Sigmoid colon (tissue), 7 donors: ENCODE measurements at regions of chr13 and their contacts with region 1.

Region 1: GRCh38 chr13:97432917-97433726 is 847 bp upstream of the RAP2A start:
- DNase-seq: peak; percentile 100
- H3K4me3 ChIP-seq: peak overlapping the region; percentile 69 to 83 (median 81)
- H3K27ac ChIP-seq: peak overlapping the region; percentile 99 to 100 (median 100)
- H3K4me1 ChIP-seq: peaks cover 0 to 37% (median 25%) of the 10 kb centered on the region in 4 donors
- H3K27me3 ChIP-seq: no peaks in the 10 kb centered on the region
- CTCF ChIP-seq: no peak
- EP300 ChIP-seq: peak in 2 of 4 donors; percentile 21 to 27
- POLR2A ChIP-seq: peak; percentile 55 to 70

Region 2: GRCh38 chr13:95676762-95677563 is 1756.2 kb before region 1 on chr13 and contains the start of gene DNAJC3:
- intact Hi-C with region 1: loop called (anchors 5 kb)
- DNase-seq: peak; percentile 100
- H3K4me3 ChIP-seq: peak within 1 kb of the TSS; percentile 77 to 91 (median 88)
- H3K27ac ChIP-seq: peak within 1 kb of the TSS; percentile 97 to 98 (median 98)
- H3K4me1 ChIP-seq: peaks cover 0 to 50% (median 36%) of the 10 kb centered on the region in 4 donors
- H3K27me3 ChIP-seq: no peaks in the 10 kb centered on the region
- CTCF ChIP-seq: no peak
- EP300 ChIP-seq: peak in 1 of 4 donors; percentile 45
- POLR2A ChIP-seq: peak; percentile 77 to 90
- total RNA-seq, gene DNAJC3: 41.5 to 48.5 (median 43.4) TPM

Region 3: GRCh38 chr13:96053011-96053703 is 1380.0 kb before region 1 on chr13 and contains the start of gene UGGT2:
- intact Hi-C with region 1: loop called (anchors 5 kb)
- DNase-seq: peak; percentile 98
- H3K4me3 ChIP-seq: peak within 1 kb of the TSS; percentile 83 to 93 (median 88)
- H3K27ac ChIP-seq: peak within 1 kb of the TSS; percentile 81 to 87 (median 82)
- H3K4me1 ChIP-seq: peaks cover 0 to 12% (median 10%) of the 10 kb centered on the region in 4 donors
- H3K27me3 ChIP-seq: no peaks in the 10 kb centered on the region
- CTCF ChIP-seq: no peak
- EP300 ChIP-seq: peak in 1 of 4 donors; percentile 50
- POLR2A ChIP-seq: peak; percentile 58 to 60
- total RNA-seq, gene UGGT2: 32.7 to 40.2 (median 38.6) TPM

Region 4: GRCh38 chr13:97109841-97110492 is 323.2 kb before region 1 on chr13:
- intact Hi-C with region 1: loop called (anchors 5 kb)
- DNase-seq: peak; percentile 96
- H3K4me3 ChIP-seq: peak overlapping the region in 2 of 4 donors; percentile 20 to 27
- H3K27ac ChIP-seq: peak overlapping the region; percentile 68 to 90 (median 83)
- H3K4me1 ChIP-seq: peaks cover 0 to 69% (median 65%) of the 10 kb centered on the region in 4 donors
- H3K27me3 ChIP-seq: no peaks in the 10 kb centered on the region
- CTCF ChIP-seq: peak; percentile 87 to 95 (median 90)
- EP300 ChIP-seq: peak in 1 of 4 donors; percentile 43
- POLR2A ChIP-seq: no peak

Region 5: GRCh38 chr13:97198753-97199152 is 234.4 kb before region 1 on chr13:
- intact Hi-C with region 1: no loop called
- DNase-seq: no peak
- H3K4me3 ChIP-seq: no peak overlapping the region
- H3K27ac ChIP-seq: no peak overlapping the region
- H3K4me1 ChIP-seq: peaks cover 0 to 4% (median 0%) of the 10 kb centered on the region in 4 donors
- H3K27me3 ChIP-seq: no peaks in the 10 kb centered on the region
- CTCF ChIP-seq: no peak
- EP300 ChIP-seq: no peak
- POLR2A ChIP-seq: no peak

Region 6: GRCh38 chr13:97221989-97222700 is 211.0 kb before region 1 on chr13 and contains the start of gene MBNL2:
- intact Hi-C with region 1: loop called (anchors 5 kb)
- DNase-seq: peak; percentile 97
- H3K4me3 ChIP-seq: peak within 1 kb of the TSS; percentile 59 to 62 (median 61)
- H3K27ac ChIP-seq: peak within 1 kb of the TSS; percentile 88 to 94 (median 92)
- H3K4me1 ChIP-seq: peaks cover 0 to 33% (median 30%) of the 10 kb centered on the region in 4 donors
- H3K27me3 ChIP-seq: no peaks in the 10 kb centered on the region
- CTCF ChIP-seq: no peak
- EP300 ChIP-seq: peak in 3 of 4 donors; percentile 74 to 92 (median 87)
- POLR2A ChIP-seq: peak; percentile 76 to 80
- total RNA-seq, gene MBNL2: 84.7 to 110 (median 95.1) TPM

Region 7: GRCh38 chr13:97275265-97275664 is 157.9 kb before region 1 on chr13:
- intact Hi-C with region 1: no loop called
- DNase-seq: no peak
- H3K4me3 ChIP-seq: no peak overlapping the region
- H3K27ac ChIP-seq: peak overlapping the region; percentile 72 to 89 (median 80)
- H3K4me1 ChIP-seq: peaks cover 0 to 95% (median 89%) of the 10 kb centered on the region in 4 donors
- H3K27me3 ChIP-seq: no peaks in the 10 kb centered on the region
- CTCF ChIP-seq: no peak
- EP300 ChIP-seq: no peak
- POLR2A ChIP-seq: no peak

Region 8: GRCh38 chr13:97359181-97360057 is 73.7 kb before region 1 on chr13:
- intact Hi-C with region 1: loop called (anchors 5 kb)
- DNase-seq: peak; percentile 84
- H3K4me3 ChIP-seq: no peak overlapping the region
- H3K27ac ChIP-seq: peak overlapping the region; percentile 20 to 73 (median 51)
- H3K4me1 ChIP-seq: peaks cover 0 to 50% (median 22%) of the 10 kb centered on the region in 4 donors
- H3K27me3 ChIP-seq: no peaks in the 10 kb centered on the region
- CTCF ChIP-seq: peak; percentile 78 to 93 (median 89)
- EP300 ChIP-seq: peak in 1 of 4 donors; percentile 22
- POLR2A ChIP-seq: no peak

Region 9: GRCh38 chr13:97802213-97802612 is 369.1 kb after region 1 on chr13:
- intact Hi-C with region 1: no loop called
- DNase-seq: no peak
- H3K4me3 ChIP-seq: no peak overlapping the region
- H3K27ac ChIP-seq: no peak overlapping the region
- H3K4me1 ChIP-seq: no peaks in the 10 kb centered on the region
- H3K27me3 ChIP-seq: no peaks in the 10 kb centered on the region
- CTCF ChIP-seq: no peak
- EP300 ChIP-seq: no peak
- POLR2A ChIP-seq: no peak

Region 10: GRCh38 chr13:97975848-97976609 is 542.9 kb after region 1 on chr13:
- intact Hi-C with region 1: loop called (anchors 5 kb)
- DNase-seq: peak; percentile 94
- H3K4me3 ChIP-seq: peak overlapping the region; percentile 80 to 96 (median 86)
- H3K27ac ChIP-seq: peak overlapping the region; percentile 95 to 98 (median 97)
- H3K4me1 ChIP-seq: peaks cover 0 to 38% (median 30%) of the 10 kb centered on the region in 4 donors
- H3K27me3 ChIP-seq: no peaks in the 10 kb centered on the region
- CTCF ChIP-seq: no peak
- EP300 ChIP-seq: no peak
- POLR2A ChIP-seq: peak in 1 of 2 donors; percentile 28

Region 11: DNA sequence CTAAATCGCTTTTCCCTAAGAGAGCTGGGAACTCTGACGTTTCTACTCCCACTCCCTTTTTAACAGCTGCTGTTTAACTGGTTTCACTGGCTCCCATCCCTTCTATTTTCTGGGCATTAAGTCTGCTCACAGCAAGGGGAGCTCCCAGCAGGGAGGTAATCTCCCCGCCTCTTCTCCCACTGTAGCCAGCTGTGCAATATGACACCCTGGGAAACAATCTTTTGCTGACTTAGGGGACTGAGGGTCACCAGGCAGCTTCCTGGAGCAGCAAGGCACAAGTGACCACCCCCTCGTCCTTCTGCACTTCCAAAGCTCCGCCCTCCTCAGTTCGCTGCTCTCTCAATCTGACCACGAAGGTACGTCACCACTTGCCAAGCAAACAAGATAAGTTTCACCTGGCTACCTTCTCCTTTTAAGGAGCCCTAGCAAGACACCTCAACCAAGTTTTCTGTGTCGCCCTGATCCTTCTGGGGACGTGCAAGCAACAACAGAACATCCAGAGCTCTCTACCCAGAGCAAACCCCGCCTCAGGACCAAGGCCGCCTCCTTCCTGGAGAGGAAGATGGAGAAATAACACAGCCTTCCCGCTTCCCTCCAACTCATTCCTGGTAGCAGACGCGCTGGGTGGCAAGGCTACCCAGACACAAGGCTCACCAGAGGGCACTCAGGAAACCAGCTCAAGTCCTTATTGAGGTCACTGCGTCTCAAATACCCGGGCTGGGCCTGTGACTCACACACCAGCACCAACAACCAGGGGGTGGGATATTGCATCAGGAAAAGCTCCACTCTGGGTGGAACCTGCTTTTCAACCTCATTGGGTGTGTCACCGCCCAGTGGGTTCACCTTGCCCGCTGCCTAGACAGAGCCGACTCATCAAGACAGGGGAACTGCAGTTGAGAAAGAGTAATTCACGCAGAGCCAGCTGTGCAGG is 1051.4 kb after region 1 on chr13:
- intact Hi-C with region 1: no loop called
- DNase-seq: peak; percentile 91
- H3K4me3 ChIP-seq: no peak overlapping the region
- H3K27ac ChIP-seq: peak overlapping the region; percentile 73 to 88 (median 81)
- H3K4me1 ChIP-seq: peaks cover 0 to 100% (median 96%) of the 10 kb centered on the region in 4 donors
- H3K27me3 ChIP-seq: no peaks in the 10 kb centered on the region
- CTCF ChIP-seq: no peak
- EP300 ChIP-seq: peak in 2 of 4 donors; percentile 19 to 46
- POLR2A ChIP-seq: peak in 1 of 2 donors; percentile 9